ENCODE measurements at regions of chr1 and their contacts with region 1.

Region 1: GRCh38 chr1:24201941-24202440 is 14.9 kb upstream of the IFNLR1 start:
- DNase-seq: peak; percentile 29 to 57 (median 41)
- H3K4me3 ChIP-seq: no peak overlapping the region
- H3K4me3 Mint-ChIP-seq: no peak overlapping the region
- H3K27ac ChIP-seq: no peak overlapping the region
- H3K27ac Mint-ChIP-seq: no peak overlapping the region
- H3K4me1 ChIP-seq: peaks cover 6% of the 10 kb centered on the region
- H3K4me1 Mint-ChIP-seq: peaks cover 5 to 6% (median 6%) of the 10 kb centered on the region in 3 donors
- H3K27me3 ChIP-seq: no peaks in the 10 kb centered on the region
- H3K27me3 Mint-ChIP-seq: peaks cover 4 to 7% of the 10 kb centered on the region in 2 donors

Region 2: GRCh38 chr1:24186993-24187805 is 14.8 kb before region 1 on chr1 and contains the start of gene IFNLR1:
- CTCF ChIA-PET with region 1: interaction called, 56 read pairs
- POLR2A ChIA-PET with region 1: no interaction called
- DNase-seq: peak; percentile 57 to 83 (median 69)
- H3K4me3 ChIP-seq: peak within 1 kb of the TSS; percentile 66
- H3K4me3 Mint-ChIP-seq: peak within 1 kb of the TSS; percentile 86 to 95 (median 89)
- H3K27ac ChIP-seq: no peak within 1 kb of the TSS
- H3K27ac Mint-ChIP-seq: peak within 1 kb of the TSS; percentile 59 to 95 (median 90)
- H3K4me1 ChIP-seq: peaks cover 32% of the 10 kb centered on the region
- H3K4me1 Mint-ChIP-seq: peaks cover 55 to 74% (median 56%) of the 10 kb centered on the region in 3 donors
- H3K27me3 ChIP-seq: no peaks in the 10 kb centered on the region
- H3K27me3 Mint-ChIP-seq: peaks cover 0 to 3% of the 10 kb centered on the region in 2 donors
- total RNA-seq, gene IFNLR1: 5.4 to 6.1 TPM

Region 3: GRCh38 chr1:24386241-24386640 is 184.2 kb after region 1 on chr1:
- CTCF ChIA-PET with region 1: interaction called, 276 read pairs
- POLR2A ChIA-PET with region 1: interaction called, 13 read pairs
- DNase-seq: no peak
- H3K4me3 ChIP-seq: no peak overlapping the region
- H3K4me3 Mint-ChIP-seq: no peak overlapping the region
- H3K27ac ChIP-seq: no peak overlapping the region
- H3K27ac Mint-ChIP-seq: peak overlapping the region in 4 of 8 donors; percentile 22 to 54 (median 33)
- H3K4me1 ChIP-seq: peaks cover 10% of the 10 kb centered on the region
- H3K4me1 Mint-ChIP-seq: peaks cover 13 to 20% (median 18%) of the 10 kb centered on the region in 3 donors
- H3K27me3 ChIP-seq: no peaks in the 10 kb centered on the region
- H3K27me3 Mint-ChIP-seq: peaks cover 0 to 1% of the 10 kb centered on the region in 2 donors

Region 4: GRCh38 chr1:24400085-24400484 is 198.1 kb after region 1 on chr1:
- CTCF ChIA-PET with region 1: interaction called, 276 read pairs
- POLR2A ChIA-PET with region 1: no interaction called
- DNase-seq: no peak
- H3K4me3 ChIP-seq: no peak overlapping the region
- H3K4me3 Mint-ChIP-seq: no peak overlapping the region
- H3K27ac ChIP-seq: no peak overlapping the region
- H3K27ac Mint-ChIP-seq: peak overlapping the region in 2 of 8 donors; percentile 14 to 91
- H3K4me1 ChIP-seq: no peaks in the 10 kb centered on the region
- H3K4me1 Mint-ChIP-seq: no peaks in the 10 kb centered on the region
- H3K27me3 ChIP-seq: no peaks in the 10 kb centered on the region
- H3K27me3 Mint-ChIP-seq: no peaks in the 10 kb centered on the region

Region 5: DNA sequence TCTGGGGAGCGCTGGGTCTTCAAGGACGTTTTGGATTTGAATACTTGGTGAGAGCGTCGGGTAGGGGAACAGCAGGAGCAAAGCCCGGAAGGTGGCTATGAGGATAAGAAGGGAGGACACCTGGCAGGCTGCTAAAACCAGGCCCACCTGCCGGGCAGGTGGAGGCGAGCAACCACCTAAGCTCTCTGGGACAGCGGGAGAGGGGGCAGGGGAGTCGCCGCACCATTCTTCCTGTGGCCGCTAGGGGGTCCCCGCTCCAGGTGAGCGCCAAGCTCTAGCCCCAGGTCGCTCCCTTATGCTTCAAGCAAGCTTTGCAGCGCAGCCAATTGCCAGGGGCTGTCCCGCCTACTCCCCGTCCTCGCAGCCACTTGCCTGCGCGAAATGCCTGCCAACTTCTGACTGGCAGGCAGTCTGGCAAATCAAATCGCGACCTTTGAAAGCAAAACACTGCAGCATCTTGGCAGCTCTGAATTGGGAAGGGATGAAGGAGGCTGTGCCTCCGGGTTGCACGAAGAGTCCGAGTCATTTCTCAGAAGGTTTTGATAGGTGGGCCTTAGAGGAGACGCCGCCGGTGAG is 213.4 kb after region 1 on chr1 and contains the start of gene NIPAL3:
- CTCF ChIA-PET with region 1: interaction called, 17 read pairs
- POLR2A ChIA-PET with region 1: no interaction called
- DNase-seq: peak; percentile 95 to 99 (median 96)
- H3K4me3 ChIP-seq: peak within 1 kb of the TSS; percentile 73
- H3K4me3 Mint-ChIP-seq: peak within 1 kb of the TSS; percentile 91 to 100 (median 97)
- H3K27ac ChIP-seq: peak within 1 kb of the TSS; percentile 27
- H3K27ac Mint-ChIP-seq: peak within 1 kb of the TSS; percentile 46 to 97 (median 92)
- H3K4me1 ChIP-seq: peaks cover 52% of the 10 kb centered on the region
- H3K4me1 Mint-ChIP-seq: peaks cover 51 to 77% (median 75%) of the 10 kb centered on the region in 3 donors
- H3K27me3 ChIP-seq: no peaks in the 10 kb centered on the region
- H3K27me3 Mint-ChIP-seq: no peaks in the 10 kb centered on the region
- total RNA-seq, gene NIPAL3: 31.3 to 33.2 TPM

Region 6: DNA sequence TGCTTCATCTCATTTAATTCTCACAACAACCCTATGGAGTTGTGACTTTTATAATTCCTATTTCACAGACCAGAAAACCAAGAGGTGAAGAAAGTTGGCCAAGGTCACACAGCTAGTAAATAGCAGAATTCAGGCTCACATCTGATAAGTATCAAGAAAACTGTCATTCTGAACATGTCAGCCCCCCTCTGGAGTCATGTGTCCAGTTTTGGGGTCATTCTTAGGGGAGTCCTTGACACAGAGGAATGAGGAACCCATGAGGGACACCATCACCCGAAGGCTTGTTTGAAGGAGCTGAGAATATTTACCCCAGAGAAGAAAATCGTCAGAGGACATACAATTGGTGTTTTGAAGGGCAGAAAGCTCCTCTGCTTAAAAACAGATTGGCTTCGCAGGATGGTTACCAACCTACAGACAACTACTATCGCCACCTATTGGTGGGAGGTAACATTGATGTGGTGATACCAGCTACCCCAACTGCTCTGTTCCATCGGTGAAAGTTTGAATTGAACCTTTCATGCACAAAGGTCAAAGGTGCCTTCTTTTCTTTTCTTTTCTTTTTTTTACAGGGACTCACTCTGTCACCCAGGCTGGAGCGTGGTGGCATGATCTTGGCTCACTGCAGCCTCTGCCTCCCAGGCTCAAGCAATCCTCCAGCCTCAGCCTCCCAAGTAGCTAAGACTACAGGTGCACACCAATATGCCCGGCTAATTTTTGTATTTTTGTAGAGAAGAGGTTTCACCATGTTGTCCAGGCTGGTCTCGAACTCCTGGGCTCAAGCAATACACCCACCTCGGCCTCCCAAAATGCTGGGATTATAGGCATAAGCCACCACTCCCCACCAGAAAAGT is 385.2 kb after region 1 on chr1:
- CTCF ChIA-PET with region 1: interaction called, 27 read pairs
- POLR2A ChIA-PET with region 1: no interaction called
- DNase-seq: peak; percentile 11 to 77 (median 63)
- H3K4me3 ChIP-seq: no peak overlapping the region
- H3K4me3 Mint-ChIP-seq: peak overlapping the region in 2 of 7 donors; percentile 28 to 34
- H3K27ac ChIP-seq: no peak overlapping the region
- H3K27ac Mint-ChIP-seq: peak overlapping the region; percentile 2 to 88 (median 66)
- H3K4me1 ChIP-seq: peaks cover 4% of the 10 kb centered on the region
- H3K4me1 Mint-ChIP-seq: peaks cover 5 to 8% (median 6%) of the 10 kb centered on the region in 3 donors
- H3K27me3 ChIP-seq: peaks cover 9% of the 10 kb centered on the region
- H3K27me3 Mint-ChIP-seq: peaks cover 5 to 8% of the 10 kb centered on the region in 2 donors

Measured in CD8-positive, alpha-beta memory T cell (primary cell).